ENCODE measurements at regions of chr15 and their contacts with region 1.

Region 1: DNA sequence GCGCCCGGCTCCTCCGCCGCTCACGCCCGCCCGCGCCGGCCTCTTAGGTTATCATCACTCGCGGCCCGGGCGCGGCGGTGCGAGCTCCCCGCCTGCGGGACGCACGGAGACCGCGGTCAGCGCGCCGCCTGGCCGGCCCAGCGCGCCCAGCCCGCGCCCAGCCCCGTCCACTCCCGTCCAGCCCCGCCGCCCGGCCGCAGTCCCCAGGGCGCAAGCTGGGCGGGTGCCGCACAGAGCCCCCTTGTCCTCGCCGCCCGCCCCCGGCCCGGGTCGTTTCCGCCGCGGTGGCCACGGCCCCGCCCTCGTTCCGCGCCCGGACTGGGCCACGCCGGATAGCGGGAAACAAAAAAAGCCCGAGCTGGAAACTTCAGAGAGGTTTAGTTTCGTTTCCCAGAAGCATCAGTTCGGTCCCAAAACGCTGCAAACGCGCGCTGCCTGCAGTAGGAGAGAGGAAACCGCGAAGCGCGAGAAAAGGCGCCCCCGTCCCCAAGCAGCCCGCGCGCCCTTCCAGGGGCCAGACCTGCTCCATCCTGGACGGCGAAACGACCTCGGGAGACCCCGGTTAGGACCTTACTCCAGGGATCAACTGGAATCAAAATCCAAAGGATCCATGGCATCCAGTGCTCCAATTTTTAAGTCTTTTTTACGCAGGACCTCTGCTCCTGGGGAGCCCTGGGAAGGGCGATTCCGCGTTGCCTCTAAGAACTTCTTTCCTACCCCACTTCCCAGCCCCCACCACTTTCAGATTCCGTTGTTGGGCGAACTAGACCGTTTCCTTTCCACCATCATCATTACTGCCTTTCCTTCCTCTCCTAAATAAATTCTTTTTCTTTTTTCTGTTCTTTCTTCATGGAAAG is at the start of gene ATP10A:
- DNase-seq: peak; percentile 72
- ATAC-seq: peak; percentile 19
- H3K4me3 Mint-ChIP-seq: peak within 1 kb of the TSS; percentile 92
- H3K27ac Mint-ChIP-seq: peak within 1 kb of the TSS; percentile 93
- H3K4me1 Mint-ChIP-seq: peaks cover 33% of the 10 kb centered on the region
- H3K27me3 Mint-ChIP-seq: no peaks in the 10 kb centered on the region
- total RNA-seq, gene ATP10A: 20.5 to 22.4 TPM

Region 2: GRCh38 chr15:25739687-25740121 is 123.6 kb before region 1 on chr15:
- CTCF ChIA-PET with region 1: no interaction called
- POLR2A ChIA-PET with region 1: no interaction called
- intact Hi-C with region 1: loop called in 1 of 2 experiments (anchors 10 kb)
- DNase-seq: peak; percentile 63
- ATAC-seq: peak; percentile 88
- H3K4me3 Mint-ChIP-seq: no peak overlapping the region
- H3K27ac Mint-ChIP-seq: no peak overlapping the region
- H3K4me1 Mint-ChIP-seq: peaks cover 19% of the 10 kb centered on the region
- H3K27me3 Mint-ChIP-seq: no peaks in the 10 kb centered on the region

Region 3: GRCh38 chr15:25790000-25790660 is 73.2 kb before region 1 on chr15:
- CTCF ChIA-PET with region 1: no interaction called
- POLR2A ChIA-PET with region 1: no interaction called
- intact Hi-C with region 1: loop called (anchors 2 kb)
- DNase-seq: peak; percentile 78
- ATAC-seq: peak; percentile 98
- H3K4me3 Mint-ChIP-seq: no peak overlapping the region
- H3K27ac Mint-ChIP-seq: peak overlapping the region; percentile 65
- H3K4me1 Mint-ChIP-seq: peaks cover 62% of the 10 kb centered on the region
- H3K27me3 Mint-ChIP-seq: no peaks in the 10 kb centered on the region

Region 4: DNA sequence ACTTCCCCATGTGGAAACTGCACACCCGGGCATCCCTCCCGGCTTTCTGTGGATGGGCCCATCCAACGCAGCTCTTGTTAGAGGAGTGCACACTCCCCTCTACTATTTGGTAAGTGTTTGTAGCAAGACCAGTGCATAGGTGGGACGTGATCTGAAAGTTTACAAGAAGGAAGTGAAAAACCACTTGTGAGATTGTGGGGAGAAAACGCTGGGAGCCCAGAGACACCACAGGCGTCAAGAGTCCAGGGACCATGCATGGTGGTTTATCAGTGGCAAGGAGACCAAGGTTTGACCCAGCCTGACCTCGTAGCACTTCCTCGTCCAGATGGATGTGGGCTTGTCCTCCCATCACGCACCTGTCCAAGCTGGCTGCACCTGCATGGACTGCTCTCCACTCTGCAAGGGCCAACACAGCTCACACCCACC is 51.8 kb before region 1 on chr15:
- CTCF ChIA-PET with region 1: interaction called, 3 read pairs
- POLR2A ChIA-PET with region 1: no interaction called
- intact Hi-C with region 1: loop called in 1 of 2 experiments (anchors 2 kb)
- DNase-seq: no peak
- ATAC-seq: peak; percentile 30
- H3K4me3 Mint-ChIP-seq: peak overlapping the region; percentile 16
- H3K27ac Mint-ChIP-seq: peak overlapping the region; percentile 81
- H3K4me1 Mint-ChIP-seq: peaks cover 62% of the 10 kb centered on the region
- H3K27me3 Mint-ChIP-seq: no peaks in the 10 kb centered on the region

Region 5: GRCh38 chr15:26082221-26083109 is 219.1 kb after region 1 on chr15:
- CTCF ChIA-PET with region 1: no interaction called
- POLR2A ChIA-PET with region 1: no interaction called
- intact Hi-C with region 1: loop called in 1 of 2 experiments (anchors 5 kb)
- DNase-seq: peak; percentile 97
- ATAC-seq: peak; percentile 99
- H3K4me3 Mint-ChIP-seq: peak overlapping the region; percentile 84
- H3K27ac Mint-ChIP-seq: peak overlapping the region; percentile 95
- H3K4me1 Mint-ChIP-seq: peaks cover 32% of the 10 kb centered on the region
- H3K27me3 Mint-ChIP-seq: no peaks in the 10 kb centered on the region

Region 6: GRCh38 chr15:26916785-26917184 is 1053.4 kb after region 1 on chr15:
- CTCF ChIA-PET with region 1: no interaction called
- POLR2A ChIA-PET with region 1: no interaction called
- intact Hi-C with region 1: no loop called
- DNase-seq: no peak
- ATAC-seq: no peak
- H3K4me3 Mint-ChIP-seq: no peak overlapping the region
- H3K27ac Mint-ChIP-seq: no peak overlapping the region
- H3K4me1 Mint-ChIP-seq: no peaks in the 10 kb centered on the region
- H3K27me3 Mint-ChIP-seq: no peaks in the 10 kb centered on the region

Measured in activated CD4-positive, alpha-beta T cell treated with anti-CD3 and anti-CD28 coated beads for 36 hours (primary cell).